CD4-positive, alpha-beta T cell (primary cell): ENCODE measurements at regions of chr12 and their contacts with region 1.

Region 1: DNA sequence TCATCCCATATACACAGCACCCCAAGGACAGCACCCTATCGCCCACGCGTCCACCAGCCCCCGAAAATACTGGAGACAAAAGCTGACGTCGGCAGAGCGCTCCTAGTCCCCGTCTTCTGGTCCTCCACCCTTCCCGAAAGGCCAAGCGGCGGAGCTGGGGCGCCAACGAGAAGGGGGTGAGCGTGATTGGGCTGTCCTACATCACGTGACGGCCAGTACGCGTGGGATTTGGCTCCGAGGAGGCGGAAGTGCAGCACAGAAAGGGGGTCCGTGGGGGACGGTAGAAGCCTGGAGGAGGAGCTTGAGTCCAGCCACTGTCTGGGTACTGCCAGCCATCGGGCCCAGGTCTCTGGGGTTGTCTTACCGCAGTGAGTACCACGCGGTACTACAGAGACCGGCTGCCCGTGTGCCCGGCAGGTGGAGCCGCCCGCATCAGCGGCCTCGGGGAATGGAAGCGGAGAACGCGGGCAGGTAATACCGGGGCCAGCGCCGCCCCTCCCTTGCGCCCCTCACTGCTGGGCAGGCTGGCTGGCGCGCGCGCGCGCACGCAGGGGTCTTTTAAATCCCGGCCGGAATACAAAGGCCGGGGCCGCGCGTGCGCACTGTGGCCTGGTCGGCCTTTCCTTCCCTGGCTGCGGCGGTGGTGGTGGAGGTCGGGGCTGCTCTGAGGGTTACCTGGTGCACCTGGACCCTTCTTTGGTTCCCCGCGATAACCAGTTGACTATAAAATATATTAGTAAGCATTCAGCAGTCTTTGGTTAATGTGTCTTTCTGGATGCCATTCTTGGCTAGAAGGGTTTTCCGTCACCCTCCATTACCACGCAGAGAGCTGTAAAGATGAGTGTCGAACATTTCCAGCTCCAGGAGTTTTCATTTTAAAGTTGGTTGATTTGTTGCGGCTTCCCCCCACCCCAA is at the start of gene TDG:
- DNase-seq: peak; percentile 89 to 99 (median 95)
- ATAC-seq: peak; percentile 94
- H3K4me3 ChIP-seq: peak within 1 kb of the TSS; percentile 62
- H3K4me3 Mint-ChIP-seq: peak within 1 kb of the TSS; percentile 94
- H3K27ac ChIP-seq: peak within 1 kb of the TSS; percentile 74 to 91
- H3K27ac Mint-ChIP-seq: peak within 1 kb of the TSS; percentile 95
- H3K4me1 ChIP-seq: peaks cover 32% of the 10 kb centered on the region
- H3K4me1 Mint-ChIP-seq: peaks cover 57% of the 10 kb centered on the region
- H3K27me3 ChIP-seq: no peaks in the 10 kb centered on the region
- H3K27me3 Mint-ChIP-seq: no peaks in the 10 kb centered on the region
- CTCF ChIP-seq: peak; percentile 18
- total RNA-seq, gene TDG: 27.5 to 29.6 TPM

Region 2: DNA sequence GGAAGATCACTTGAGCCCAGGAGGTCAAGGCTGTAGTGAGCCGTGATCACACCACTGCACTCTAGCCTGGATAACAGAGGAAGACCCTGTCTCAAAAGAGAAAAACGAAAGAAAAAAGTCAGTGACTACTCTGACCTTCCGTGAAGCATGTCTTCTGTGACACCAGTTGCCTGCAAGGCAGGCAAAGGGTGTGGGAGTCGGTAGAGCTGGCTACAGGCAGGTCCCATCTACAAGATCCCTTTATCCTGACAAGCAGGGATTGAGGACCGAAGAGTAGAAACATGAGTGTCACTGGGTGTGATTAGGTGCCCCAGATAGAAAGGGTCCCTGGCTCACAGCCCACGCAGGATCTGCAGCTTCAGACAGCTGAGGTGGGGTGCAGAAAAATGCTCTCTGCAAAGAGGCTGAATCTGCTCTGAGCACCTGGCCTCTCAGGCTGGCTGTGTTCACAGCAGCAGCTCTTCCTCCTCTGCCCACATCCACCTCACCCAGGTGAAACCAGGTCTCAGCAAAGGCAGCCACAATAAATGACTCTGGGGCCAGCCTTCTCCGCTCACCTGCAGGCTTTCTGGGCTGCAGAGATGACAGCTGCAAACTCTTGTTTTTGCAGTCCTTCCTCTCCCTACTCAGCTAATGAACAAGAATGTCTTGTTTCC is 64.2 kb before region 1 on chr12:
- CTCF ChIA-PET with region 1: no interaction called
- POLR2A ChIA-PET with region 1: interaction called, 30 read pairs
- intact Hi-C with region 1: no loop called
- DNase-seq: peak; percentile 40 to 79 (median 57)
- ATAC-seq: peak; percentile 96
- H3K4me3 ChIP-seq: peak overlapping the region; percentile 43
- H3K4me3 Mint-ChIP-seq: peak overlapping the region; percentile 70
- H3K27ac ChIP-seq: peak overlapping the region; percentile 51 to 68
- H3K27ac Mint-ChIP-seq: peak overlapping the region; percentile 95
- H3K4me1 ChIP-seq: peaks cover 55% of the 10 kb centered on the region
- H3K4me1 Mint-ChIP-seq: peaks cover 76% of the 10 kb centered on the region
- H3K27me3 ChIP-seq: no peaks in the 10 kb centered on the region
- H3K27me3 Mint-ChIP-seq: no peaks in the 10 kb centered on the region
- CTCF ChIP-seq: no peak

Region 3: DNA sequence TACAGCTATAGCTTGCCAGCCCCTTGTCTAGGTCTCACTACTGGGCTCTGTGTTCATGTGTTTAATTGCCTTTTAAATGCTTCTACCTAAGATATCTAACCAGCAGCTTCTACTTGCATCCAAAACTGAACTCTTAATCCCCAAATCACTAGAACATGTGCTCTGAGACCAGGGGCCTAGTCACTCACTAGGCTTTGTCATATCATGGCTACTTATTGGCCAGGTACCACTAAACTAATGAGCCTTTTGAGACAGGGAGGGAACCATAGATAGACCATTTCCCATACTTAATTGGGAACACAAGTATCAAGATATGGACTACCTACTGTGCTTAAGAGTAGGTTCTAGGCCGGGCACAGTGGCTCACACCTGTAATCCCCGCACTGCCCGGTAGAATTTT is 29.2 kb before region 1 on chr12:
- CTCF ChIA-PET with region 1: no interaction called
- POLR2A ChIA-PET with region 1: interaction called, 13 read pairs
- intact Hi-C with region 1: no loop called
- DNase-seq: no peak
- ATAC-seq: no peak
- H3K4me3 ChIP-seq: no peak overlapping the region
- H3K4me3 Mint-ChIP-seq: peak overlapping the region; percentile 4
- H3K27ac ChIP-seq: no peak overlapping the region
- H3K27ac Mint-ChIP-seq: peak overlapping the region; percentile 43
- H3K4me1 ChIP-seq: peaks cover 25% of the 10 kb centered on the region
- H3K4me1 Mint-ChIP-seq: peaks cover 52% of the 10 kb centered on the region
- H3K27me3 ChIP-seq: no peaks in the 10 kb centered on the region
- H3K27me3 Mint-ChIP-seq: no peaks in the 10 kb centered on the region
- CTCF ChIP-seq: no peak

Region 4: DNA sequence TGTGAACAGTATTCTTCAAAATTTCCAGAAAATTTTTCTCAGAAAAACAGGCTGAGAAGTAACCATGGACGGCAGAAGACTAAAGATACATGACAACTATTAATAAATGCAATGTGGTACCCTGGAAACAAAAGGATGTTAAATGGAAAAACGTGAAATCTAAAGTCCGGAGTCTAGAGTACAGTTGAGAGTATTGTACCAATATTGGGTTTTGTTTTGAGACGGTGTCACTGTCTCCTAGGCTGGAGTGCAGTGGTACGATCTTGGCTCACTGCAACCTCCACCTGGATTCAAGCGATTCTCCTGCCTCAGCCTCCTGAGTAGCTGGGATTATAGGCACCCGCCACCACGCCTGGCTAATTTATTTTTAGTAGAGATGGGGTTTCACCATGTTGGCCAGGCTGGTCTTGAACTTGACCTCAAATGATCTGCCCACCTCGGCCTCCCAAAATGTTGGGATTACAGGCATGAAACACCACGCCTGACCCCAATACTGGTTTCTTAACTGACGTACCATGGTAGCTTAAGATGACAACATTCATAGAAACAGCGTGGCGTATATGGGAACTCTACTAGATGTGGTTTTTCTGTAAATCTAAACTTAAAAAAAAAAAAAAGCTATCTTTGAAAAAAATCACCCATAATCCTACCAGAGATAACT is 17.0 kb before region 1 on chr12:
- CTCF ChIA-PET with region 1: interaction called, 20 read pairs
- POLR2A ChIA-PET with region 1: interaction called, 25 read pairs
- intact Hi-C with region 1: loop called in 1 of 2 experiments (anchors 2 kb)
- DNase-seq: no peak
- ATAC-seq: peak; percentile 24
- H3K4me3 ChIP-seq: no peak overlapping the region
- H3K4me3 Mint-ChIP-seq: no peak overlapping the region
- H3K27ac ChIP-seq: no peak overlapping the region
- H3K27ac Mint-ChIP-seq: peak overlapping the region; percentile 60
- H3K4me1 ChIP-seq: no peaks in the 10 kb centered on the region
- H3K4me1 Mint-ChIP-seq: peaks cover 17% of the 10 kb centered on the region
- H3K27me3 ChIP-seq: no peaks in the 10 kb centered on the region
- H3K27me3 Mint-ChIP-seq: no peaks in the 10 kb centered on the region
- CTCF ChIP-seq: no peak

Region 5: DNA sequence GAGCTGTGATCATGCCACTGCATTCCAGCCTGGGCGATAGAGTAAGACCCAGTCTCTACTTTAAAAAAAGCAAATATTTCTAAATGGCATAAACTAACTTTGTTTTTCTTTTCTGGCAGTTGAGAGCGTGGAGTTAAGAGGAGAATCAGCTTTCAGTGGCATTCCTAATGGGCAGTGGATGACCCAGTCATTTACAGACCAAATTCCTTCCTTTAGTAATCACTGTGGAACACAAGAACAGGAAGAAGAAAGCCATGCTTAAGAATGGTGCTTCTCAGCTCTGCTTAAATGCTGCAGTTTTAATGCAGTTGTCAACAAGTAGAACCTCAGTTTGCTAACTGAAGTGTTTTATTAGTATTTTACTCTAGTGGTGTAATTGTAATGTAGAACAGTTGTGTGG is 21.0 kb after region 1 on chr12:
- CTCF ChIA-PET with region 1: no interaction called
- POLR2A ChIA-PET with region 1: no interaction called
- intact Hi-C with region 1: no loop called
- DNase-seq: no peak
- ATAC-seq: no peak
- H3K4me3 ChIP-seq: no peak overlapping the region
- H3K4me3 Mint-ChIP-seq: no peak overlapping the region
- H3K27ac ChIP-seq: no peak overlapping the region
- H3K27ac Mint-ChIP-seq: no peak overlapping the region
- H3K4me1 ChIP-seq: no peaks in the 10 kb centered on the region
- H3K4me1 Mint-ChIP-seq: no peaks in the 10 kb centered on the region
- H3K27me3 ChIP-seq: no peaks in the 10 kb centered on the region
- H3K27me3 Mint-ChIP-seq: no peaks in the 10 kb centered on the region
- CTCF ChIP-seq: no peak

Region 6: DNA sequence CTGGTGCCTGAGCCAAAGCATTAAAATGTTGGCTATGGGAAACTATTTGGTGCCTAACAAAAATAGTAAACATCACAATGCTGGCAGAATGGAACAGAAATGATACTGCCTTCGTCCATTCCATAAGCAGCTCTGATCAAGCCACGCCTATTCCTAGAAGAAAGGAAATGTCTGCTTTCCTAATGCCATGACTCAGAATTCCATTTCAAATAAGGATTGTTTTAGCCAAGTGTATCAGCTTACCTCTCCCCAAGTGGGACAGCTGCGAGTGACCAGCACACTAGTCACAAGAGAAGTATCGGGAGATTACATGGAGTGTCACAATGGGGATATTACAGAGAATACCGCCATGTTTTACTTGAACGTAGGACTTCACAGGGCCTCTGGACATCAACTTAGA is 45.4 kb after region 1 on chr12:
- CTCF ChIA-PET with region 1: no interaction called
- POLR2A ChIA-PET with region 1: no interaction called
- intact Hi-C with region 1: no loop called
- DNase-seq: no peak
- ATAC-seq: no peak
- H3K4me3 ChIP-seq: no peak overlapping the region
- H3K4me3 Mint-ChIP-seq: no peak overlapping the region
- H3K27ac ChIP-seq: no peak overlapping the region
- H3K27ac Mint-ChIP-seq: no peak overlapping the region
- H3K4me1 ChIP-seq: no peaks in the 10 kb centered on the region
- H3K4me1 Mint-ChIP-seq: no peaks in the 10 kb centered on the region
- H3K27me3 ChIP-seq: no peaks in the 10 kb centered on the region
- H3K27me3 Mint-ChIP-seq: peaks cover 24% of the 10 kb centered on the region
- CTCF ChIP-seq: no peak

Region 7: GRCh38 chr12:104064031-104064822 is 98.4 kb after region 1 on chr12 and contains the start of gene HCFC2:
- CTCF ChIA-PET with region 1: interaction called, 3 read pairs
- POLR2A ChIA-PET with region 1: interaction called, 20 read pairs
- intact Hi-C with region 1: loop called (anchors 5 to 10 kb)
- DNase-seq: peak; percentile 74 to 93 (median 85)
- ATAC-seq: peak; percentile 92
- H3K4me3 ChIP-seq: peak within 1 kb of the TSS; percentile 85
- H3K4me3 Mint-ChIP-seq: peak within 1 kb of the TSS; percentile 95
- H3K27ac ChIP-seq: peak within 1 kb of the TSS; percentile 42 to 59
- H3K27ac Mint-ChIP-seq: peak within 1 kb of the TSS; percentile 82
- H3K4me1 ChIP-seq: peaks cover 17% of the 10 kb centered on the region
- H3K4me1 Mint-ChIP-seq: peaks cover 33% of the 10 kb centered on the region
- H3K27me3 ChIP-seq: peaks cover 0 to 2% of the 10 kb centered on the region in 2 experiments
- H3K27me3 Mint-ChIP-seq: peaks cover 10% of the 10 kb centered on the region
- CTCF ChIP-seq: no peak
- total RNA-seq, gene HCFC2: 11.2 to 15.1 TPM

Region 8: DNA sequence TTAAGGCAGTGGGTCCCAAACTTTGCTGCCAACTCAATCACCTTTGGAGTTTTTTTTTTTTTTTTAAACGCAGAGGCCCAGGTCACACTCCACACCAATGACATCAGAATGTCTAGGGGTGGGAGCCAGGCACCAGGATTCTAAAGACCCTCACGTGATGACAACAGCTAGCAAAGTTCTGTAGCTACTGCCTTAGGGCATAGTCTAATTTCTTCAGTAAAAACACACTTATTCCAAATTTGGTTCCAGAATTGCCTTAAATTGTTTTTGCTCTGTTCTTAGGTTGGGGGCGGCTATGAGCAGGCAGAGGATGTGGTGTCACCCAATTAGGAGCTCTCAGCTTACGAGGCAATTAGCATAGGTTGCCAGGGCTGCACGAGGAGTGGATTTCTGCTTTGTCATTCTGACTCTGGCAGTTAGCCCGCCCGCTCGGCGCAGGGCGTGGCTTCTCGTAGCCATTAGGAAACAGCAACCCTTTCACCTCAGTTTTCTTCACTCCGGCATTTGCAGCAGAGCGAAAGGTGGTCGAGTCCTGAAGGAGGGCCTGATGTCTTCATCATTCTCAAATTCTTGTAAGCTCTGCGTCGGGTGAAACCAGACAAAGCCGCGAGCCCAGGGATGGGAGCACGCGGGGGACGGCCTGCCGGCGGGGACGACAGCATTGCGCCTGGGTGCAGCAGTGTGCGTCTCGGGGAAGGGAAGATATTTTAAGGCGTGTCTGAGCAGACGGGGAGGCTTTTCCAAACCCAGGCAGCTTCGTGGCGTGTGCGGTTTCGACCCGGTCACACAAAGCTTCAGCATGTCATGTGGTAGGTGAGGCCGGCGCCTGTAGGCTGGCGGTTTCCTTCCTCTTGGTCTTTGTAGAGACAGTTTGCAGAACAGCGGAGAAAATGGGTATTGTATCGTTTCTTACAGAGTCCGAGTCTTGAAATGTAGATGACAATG is 321.0 kb after region 1 on chr12:
- CTCF ChIA-PET with region 1: no interaction called
- POLR2A ChIA-PET with region 1: no interaction called
- intact Hi-C with region 1: loop called in 1 of 2 experiments (anchors 10 kb)
- DNase-seq: peak; percentile 70 to 96 (median 86)
- ATAC-seq: peak; percentile 84
- H3K4me3 ChIP-seq: peak overlapping the region; percentile 90
- H3K4me3 Mint-ChIP-seq: peak overlapping the region; percentile 98
- H3K27ac ChIP-seq: peak overlapping the region; percentile 67 to 84
- H3K27ac Mint-ChIP-seq: peak overlapping the region; percentile 96
- H3K4me1 ChIP-seq: peaks cover 35% of the 10 kb centered on the region
- H3K4me1 Mint-ChIP-seq: peaks cover 35% of the 10 kb centered on the region
- H3K27me3 ChIP-seq: peaks cover 0 to 7% of the 10 kb centered on the region in 2 experiments
- H3K27me3 Mint-ChIP-seq: no peaks in the 10 kb centered on the region
- CTCF ChIP-seq: no peak

Region 9: DNA sequence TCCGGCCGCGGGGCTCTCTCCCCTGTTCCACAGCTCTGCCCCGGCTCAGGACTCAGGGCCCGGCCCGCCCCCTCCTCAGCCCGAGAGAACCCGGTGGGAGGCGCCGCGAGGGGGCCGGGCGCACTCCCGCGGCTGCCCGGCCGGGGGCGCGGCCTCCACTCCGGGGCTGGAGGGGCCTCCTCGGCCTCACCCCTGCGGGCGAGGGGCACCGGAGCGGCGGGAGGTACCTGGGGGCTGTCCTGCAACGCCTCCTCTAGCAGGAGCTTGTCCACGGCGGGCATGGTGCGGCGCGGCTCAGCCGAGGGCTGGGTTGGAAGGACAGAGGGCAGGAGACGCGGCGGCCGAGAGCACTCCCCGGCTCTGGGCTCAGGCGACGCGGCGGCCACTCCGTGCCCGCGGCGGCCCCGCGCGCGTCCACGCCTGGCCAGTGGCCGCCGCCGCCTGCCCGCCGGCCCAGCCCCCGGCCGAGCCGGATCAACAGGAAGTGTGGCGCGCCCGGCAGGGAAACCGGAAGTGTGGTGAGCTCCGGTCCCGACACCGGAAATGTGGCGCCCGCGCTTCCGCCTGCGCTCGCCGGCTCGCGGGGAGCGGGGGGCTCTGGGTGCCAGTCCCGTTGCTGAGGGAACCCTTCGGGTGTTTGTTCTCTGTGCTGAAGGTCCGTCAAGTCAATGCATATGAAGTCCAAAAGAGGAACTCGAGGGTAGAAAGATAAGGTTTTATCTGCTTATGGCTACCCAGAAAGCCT is 1270.1 kb after region 1 on chr12 and contains the start of gene APPL2:
- CTCF ChIA-PET with region 1: no interaction called
- POLR2A ChIA-PET with region 1: interaction called, 3 read pairs
- intact Hi-C with region 1: loop called in 1 of 2 experiments (anchors 10 kb)
- DNase-seq: peak; percentile 55 to 90 (median 80)
- ATAC-seq: peak; percentile 76
- H3K4me3 ChIP-seq: peak within 1 kb of the TSS; percentile 74
- H3K4me3 Mint-ChIP-seq: peak within 1 kb of the TSS; percentile 94
- H3K27ac ChIP-seq: peak within 1 kb of the TSS; percentile 68 to 83
- H3K27ac Mint-ChIP-seq: peak within 1 kb of the TSS; percentile 90
- H3K4me1 ChIP-seq: peaks cover 39% of the 10 kb centered on the region
- H3K4me1 Mint-ChIP-seq: peaks cover 47% of the 10 kb centered on the region
- H3K27me3 ChIP-seq: no peaks in the 10 kb centered on the region
- H3K27me3 Mint-ChIP-seq: no peaks in the 10 kb centered on the region
- CTCF ChIP-seq: peak; percentile 48
- total RNA-seq, gene APPL2: 58.8 to 59.9 TPM